CD8-positive, alpha-beta memory T cell (primary cell): ENCODE measurements at regions of chr11 and their contacts with region 1.

Region 1: GRCh38 chr11:119363851-119364590 is 17.5 kb downstream of the USP2 start:
- DNase-seq: peak; percentile 42 to 65 (median 53)
- H3K4me3 ChIP-seq: no peak overlapping the region
- H3K4me3 Mint-ChIP-seq: peak overlapping the region; percentile 13 to 88 (median 79)
- H3K27ac ChIP-seq: no peak overlapping the region
- H3K27ac Mint-ChIP-seq: peak overlapping the region in 3 of 8 donors; percentile 84 to 87 (median 87)
- H3K4me1 ChIP-seq: peaks cover 9% of the 10 kb centered on the region
- H3K4me1 Mint-ChIP-seq: peaks cover 8 to 13% (median 11%) of the 10 kb centered on the region in 3 donors
- H3K27me3 ChIP-seq: peaks cover 30% of the 10 kb centered on the region
- H3K27me3 Mint-ChIP-seq: peaks cover 42 to 59% of the 10 kb centered on the region in 2 donors

Region 2: DNA sequence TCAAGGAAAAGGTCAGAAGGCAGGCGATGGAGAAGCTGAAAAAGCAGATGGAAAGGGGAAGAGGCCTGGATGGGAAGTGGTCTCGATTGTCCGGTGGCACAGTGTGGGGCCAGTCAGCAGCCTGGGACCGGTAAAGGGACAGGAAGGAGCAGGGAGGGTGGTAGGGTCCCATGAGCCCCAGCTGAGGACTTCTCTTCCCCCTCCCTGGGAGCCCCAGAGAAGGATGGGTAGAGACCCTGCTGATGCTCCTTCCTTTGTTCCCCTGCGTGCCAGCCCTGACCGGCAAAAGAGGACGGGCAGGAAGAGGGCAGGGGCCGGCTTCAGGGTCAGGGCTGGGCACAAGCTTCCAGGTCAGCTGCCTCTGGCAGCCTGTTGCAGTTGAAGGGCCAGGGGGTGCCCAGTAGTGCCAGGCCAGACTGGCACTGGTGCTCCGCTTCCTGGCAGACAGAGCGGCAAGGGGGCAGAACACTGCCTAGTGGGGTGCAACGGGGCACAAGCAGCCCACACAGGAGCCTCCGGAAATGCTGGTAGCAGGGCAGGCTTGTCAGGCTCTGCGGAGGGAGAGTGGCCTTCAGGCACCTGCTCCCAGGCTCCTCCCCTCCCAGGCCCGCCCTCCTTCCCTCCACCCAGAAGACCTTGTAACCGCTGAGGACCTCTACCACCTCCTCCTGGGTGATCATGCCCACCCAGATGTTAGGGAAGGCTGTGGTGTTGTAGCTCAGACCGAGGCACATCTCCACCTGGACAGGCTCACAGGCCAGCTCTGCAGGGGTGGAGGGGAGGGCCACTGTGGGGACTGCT is 22.6 kb before region 1 on chr11:
- CTCF ChIA-PET with region 1: no interaction called
- POLR2A ChIA-PET with region 1: no interaction called
- DNase-seq: no peak
- H3K4me3 ChIP-seq: no peak overlapping the region
- H3K4me3 Mint-ChIP-seq: peak overlapping the region in 2 of 7 donors; percentile 51 to 74
- H3K27ac ChIP-seq: no peak overlapping the region
- H3K27ac Mint-ChIP-seq: peak overlapping the region in 2 of 8 donors; percentile 1 to 2
- H3K4me1 ChIP-seq: peaks cover 5% of the 10 kb centered on the region
- H3K4me1 Mint-ChIP-seq: peaks cover 15 to 29% (median 21%) of the 10 kb centered on the region in 3 donors
- H3K27me3 ChIP-seq: peaks cover 45% of the 10 kb centered on the region
- H3K27me3 Mint-ChIP-seq: peaks cover 31 to 54% of the 10 kb centered on the region in 2 donors

Region 3: GRCh38 chr11:119373921-119374631 is 10.1 kb after region 1 on chr11:
- CTCF ChIA-PET with region 1: interaction called, 145 read pairs
- POLR2A ChIA-PET with region 1: no interaction called
- DNase-seq: peak in 4 of 5 donors; percentile 33 to 59 (median 38)
- H3K4me3 ChIP-seq: no peak overlapping the region
- H3K4me3 Mint-ChIP-seq: peak overlapping the region in 2 of 7 donors; percentile 10 to 32
- H3K27ac ChIP-seq: no peak overlapping the region
- H3K27ac Mint-ChIP-seq: peak overlapping the region in 5 of 8 donors; percentile 17 to 63 (median 47)
- H3K4me1 ChIP-seq: peaks cover 9% of the 10 kb centered on the region
- H3K4me1 Mint-ChIP-seq: peaks cover 18 to 29% (median 19%) of the 10 kb centered on the region in 3 donors
- H3K27me3 ChIP-seq: no peaks in the 10 kb centered on the region
- H3K27me3 Mint-ChIP-seq: peaks cover 6 to 16% of the 10 kb centered on the region in 2 donors

Region 4: GRCh38 chr11:119381181-119381988 is 17.4 kb after region 1 on chr11 and contains the start of gene USP2:
- CTCF ChIA-PET with region 1: interaction called, 145 read pairs
- POLR2A ChIA-PET with region 1: no interaction called
- DNase-seq: peak; percentile 97 to 99 (median 97)
- H3K4me3 ChIP-seq: peak within 1 kb of the TSS; percentile 74
- H3K4me3 Mint-ChIP-seq: peak within 1 kb of the TSS in 1 of 7 donors; percentile 10
- H3K27ac ChIP-seq: peak within 1 kb of the TSS; percentile 69
- H3K27ac Mint-ChIP-seq: peak within 1 kb of the TSS in 3 of 8 donors; percentile 26 to 36 (median 35)
- H3K4me1 ChIP-seq: peaks cover 13% of the 10 kb centered on the region
- H3K4me1 Mint-ChIP-seq: peaks cover 0 to 8% (median 4%) of the 10 kb centered on the region in 3 donors
- H3K27me3 ChIP-seq: no peaks in the 10 kb centered on the region
- H3K27me3 Mint-ChIP-seq: peaks cover 0 to 3% of the 10 kb centered on the region in 2 donors
- total RNA-seq, gene USP2: 0.15 to 0.51 TPM